K562 (cell line): ENCODE measurements at regions of chr2 and their contacts with region 1.

Region 1: GRCh38 chr2:47906157-47907038 is at the start of gene FBXO11:
- DNase-seq: peak; percentile 95 to 97 (median 96)
- ATAC-seq: peak; percentile 86
- H3K4me3 ChIP-seq: peak within 1 kb of the TSS; percentile 93
- H3K27ac ChIP-seq: peak within 1 kb of the TSS; percentile 97
- H3K4me1 ChIP-seq: peaks cover 4 to 18% of the 10 kb centered on the region in 2 experiments; a peak in 4 of 5 replicates
- H3K27me3 ChIP-seq: no peaks in the 10 kb centered on the region
- CTCF ChIP-seq: peak; percentile 63 to 71 (median 64); a peak in 4 of 6 replicates
- EP300 ChIP-seq: peak; percentile 58
- POLR2A ChIP-seq: peak; percentile 85
- RAD21 ChIP-seq: no peak
- polyA plus RNA-seq, gene FBXO11: 8.8 to 11.8 TPM

Region 2: GRCh38 chr2:47782671-47783485 is 123.5 kb before region 1 on chr2 and contains the start of gene MSH6:
- CTCF ChIA-PET with region 1: no interaction called
- POLR2A ChIA-PET with region 1: interaction called, 5 read pairs
- in situ Hi-C with region 1: no loop called
- intact Hi-C with region 1: loop called (anchors 1 kb)
- DNase-seq: peak; percentile 92 to 97 (median 96)
- ATAC-seq: peak; percentile 89
- H3K4me3 ChIP-seq: peak within 1 kb of the TSS; percentile 97
- H3K27ac ChIP-seq: peak within 1 kb of the TSS; percentile 97
- H3K4me1 ChIP-seq: peaks cover 9 to 30% of the 10 kb centered on the region in 2 experiments; a peak in 4 of 5 replicates
- H3K27me3 ChIP-seq: no peaks in the 10 kb centered on the region
- CTCF ChIP-seq: no peak
- EP300 ChIP-seq: no peak
- POLR2A ChIP-seq: peak; percentile 87
- RAD21 ChIP-seq: no peak
- polyA plus RNA-seq, gene MSH6: 15.3 to 30.3 TPM

Region 3: GRCh38 chr2:47917276-47917961 is 11.0 kb after region 1 on chr2:
- CTCF ChIA-PET with region 1: no interaction called
- POLR2A ChIA-PET with region 1: interaction called, 17 read pairs
- in situ Hi-C with region 1: no loop called
- intact Hi-C with region 1: no loop called
- DNase-seq: no peak
- ATAC-seq: no peak
- H3K4me3 ChIP-seq: no peak overlapping the region
- H3K27ac ChIP-seq: no peak overlapping the region
- H3K4me1 ChIP-seq: no peaks in the 10 kb centered on the region
- H3K27me3 ChIP-seq: no peaks in the 10 kb centered on the region
- CTCF ChIP-seq: no peak
- EP300 ChIP-seq: no peak
- POLR2A ChIP-seq: no peak
- RAD21 ChIP-seq: no peak